ENCODE measurements at regions of chr21 and their contacts with region 1.

Region 1: GRCh38 chr21:44927587-44928461 is 7.1 kb upstream of the ITGB2 start:
- DNase-seq: peak; percentile 97
- H3K4me3 Mint-ChIP-seq: peak overlapping the region; percentile 80
- H3K27ac Mint-ChIP-seq: peak overlapping the region; percentile 99
- H3K4me1 Mint-ChIP-seq: peaks cover 76% of the 10 kb centered on the region
- H3K27me3 Mint-ChIP-seq: no peaks in the 10 kb centered on the region

Region 2: DNA sequence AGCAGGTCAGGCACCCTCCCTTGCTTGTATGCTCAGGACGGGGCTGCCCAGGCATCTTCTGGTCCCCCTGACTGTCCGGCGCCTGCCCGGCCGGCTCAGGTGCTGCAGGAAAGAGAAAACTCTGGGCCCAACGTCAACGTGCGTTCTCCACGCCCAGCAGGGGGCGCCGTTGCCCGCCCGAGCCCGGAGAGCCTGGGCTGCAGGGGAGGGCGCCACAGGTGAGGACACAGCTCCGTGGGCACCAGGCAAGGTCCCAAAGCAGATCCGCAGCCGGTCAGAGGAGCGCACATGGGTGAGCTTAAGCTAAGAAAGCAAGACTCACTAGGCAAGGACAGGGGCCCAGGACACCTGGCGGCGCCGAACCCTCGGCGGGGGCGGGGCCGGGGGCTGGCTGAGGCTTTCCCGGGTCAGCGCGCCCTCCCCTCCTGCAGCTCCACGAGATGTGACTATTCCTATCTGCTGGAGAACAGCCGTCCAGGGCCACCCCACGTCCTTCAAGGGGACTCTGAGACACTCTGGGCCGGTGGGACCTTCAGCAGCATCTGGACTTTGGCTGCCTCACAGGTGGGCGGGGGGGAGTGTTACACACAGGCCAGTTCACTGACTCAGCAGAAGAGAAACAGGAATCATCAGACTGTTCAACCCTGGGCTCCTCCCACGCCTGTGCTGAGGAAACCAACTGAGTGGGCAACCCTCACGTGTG is 417.2 kb before region 1 on chr21:
- CTCF ChIA-PET with region 1: no interaction called
- intact Hi-C with region 1: loop called (anchors 5 kb)
- DNase-seq: peak; percentile 81
- H3K4me3 Mint-ChIP-seq: no peak overlapping the region
- H3K27ac Mint-ChIP-seq: no peak overlapping the region
- H3K4me1 Mint-ChIP-seq: peaks cover 5% of the 10 kb centered on the region
- H3K27me3 Mint-ChIP-seq: no peaks in the 10 kb centered on the region

Region 3: GRCh38 chr21:44817506-44817880 is 110.3 kb before region 1 on chr21:
- CTCF ChIA-PET with region 1: no interaction called
- intact Hi-C with region 1: loop called (anchors 2 kb)
- DNase-seq: peak; percentile 95
- H3K4me3 Mint-ChIP-seq: peak overlapping the region; percentile 65
- H3K27ac Mint-ChIP-seq: no peak overlapping the region
- H3K4me1 Mint-ChIP-seq: peaks cover 15% of the 10 kb centered on the region
- H3K27me3 Mint-ChIP-seq: no peaks in the 10 kb centered on the region

Region 4: DNA sequence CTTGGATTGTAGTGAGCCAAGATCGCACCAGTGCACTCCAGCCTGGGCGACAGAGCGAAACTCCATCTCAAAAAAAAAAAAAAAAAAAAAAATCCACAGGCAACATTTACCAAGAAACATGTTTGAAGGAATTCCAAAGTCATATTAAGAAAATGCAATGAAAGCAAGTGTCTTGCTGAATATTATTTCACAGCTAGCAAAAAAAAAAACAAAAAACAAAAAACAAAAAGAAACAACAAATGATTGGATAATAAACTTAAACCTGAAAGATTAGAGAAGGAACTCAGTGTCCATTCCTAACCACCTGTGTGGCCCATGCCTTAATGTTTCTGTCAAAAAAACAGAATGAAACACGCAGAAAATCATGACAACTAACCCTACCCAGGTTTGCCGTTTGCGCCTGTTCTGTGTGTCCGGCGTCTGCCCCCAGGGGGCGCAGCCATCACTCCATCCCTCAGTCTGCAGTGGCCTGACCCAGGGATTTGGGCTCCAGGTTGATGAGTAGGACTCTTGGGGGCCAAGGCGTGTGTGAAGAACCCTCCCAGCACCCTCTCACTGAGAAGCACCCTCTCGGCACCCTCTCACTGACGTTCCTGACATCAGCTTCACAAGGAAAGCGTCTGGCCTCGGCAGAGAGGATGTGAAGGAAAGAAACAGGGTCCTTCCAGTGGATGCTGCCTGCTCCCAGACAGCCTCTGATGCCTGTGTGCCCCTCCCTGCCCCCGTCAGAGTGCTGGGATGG is 35.1 kb before region 1 on chr21:
- CTCF ChIA-PET with region 1: interaction called, 43 read pairs
- intact Hi-C with region 1: loop called (anchors 1 kb)
- DNase-seq: peak; percentile 85
- H3K4me3 Mint-ChIP-seq: no peak overlapping the region
- H3K27ac Mint-ChIP-seq: peak overlapping the region; percentile 75
- H3K4me1 Mint-ChIP-seq: peaks cover 7% of the 10 kb centered on the region
- H3K27me3 Mint-ChIP-seq: no peaks in the 10 kb centered on the region

Region 5: DNA sequence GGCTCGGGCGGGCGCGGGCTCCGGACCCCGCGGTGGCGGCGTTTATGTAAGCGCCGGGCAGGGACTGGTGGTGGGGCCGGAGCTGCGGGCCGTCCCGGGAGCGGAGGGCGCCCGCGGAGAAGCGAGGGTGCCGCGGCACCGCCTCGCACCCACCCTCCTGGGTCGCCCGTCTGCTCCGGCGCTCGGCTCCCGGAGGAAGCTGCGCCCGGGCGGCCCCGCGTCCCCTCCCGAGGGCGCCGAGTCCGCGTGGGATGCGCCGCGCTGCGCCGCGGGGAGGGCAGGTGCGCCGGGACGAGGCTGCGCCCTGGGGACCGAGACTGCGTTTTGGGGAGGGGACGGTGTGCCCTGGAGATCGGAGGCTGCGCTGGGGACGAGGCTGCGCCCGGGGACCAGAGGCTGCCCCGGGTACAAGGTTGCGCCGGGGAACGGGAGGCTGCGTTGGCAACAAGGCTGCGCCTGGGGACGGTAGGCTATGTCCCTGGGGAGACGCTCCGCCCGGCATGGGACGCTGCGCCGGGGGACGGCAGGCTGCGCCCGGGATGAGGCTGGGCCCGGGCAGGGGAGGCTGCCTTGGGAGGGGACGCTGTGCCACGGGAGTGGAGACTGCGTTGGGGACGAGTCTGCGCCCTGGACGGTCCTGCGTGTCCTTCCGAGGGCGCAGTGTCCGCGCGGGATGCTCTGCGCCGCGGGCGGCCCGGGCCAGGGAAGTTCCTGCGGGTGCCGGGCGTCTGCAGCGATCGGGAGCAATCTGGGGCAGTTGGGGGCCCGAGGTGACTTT is 147.2 kb after region 1 on chr21:
- CTCF ChIA-PET with region 1: no interaction called
- intact Hi-C with region 1: loop called (anchors 5 kb)
- DNase-seq: peak; percentile 34
- H3K4me3 Mint-ChIP-seq: peak overlapping the region; percentile 84
- H3K27ac Mint-ChIP-seq: peak overlapping the region; percentile 76
- H3K4me1 Mint-ChIP-seq: peaks cover 45% of the 10 kb centered on the region
- H3K27me3 Mint-ChIP-seq: no peaks in the 10 kb centered on the region